AG04449 (cell line): ENCODE measurements at regions of chr1 and their contacts with region 1.

Region 1: GRCh38 chr1:55021965-55022546 is 17.3 kb upstream of the PCSK9 start:
- DNase-seq: peak; percentile 40
- H3K4me3 ChIP-seq: no peak overlapping the region
- CTCF ChIP-seq: peak; percentile 95

Region 2: DNA sequence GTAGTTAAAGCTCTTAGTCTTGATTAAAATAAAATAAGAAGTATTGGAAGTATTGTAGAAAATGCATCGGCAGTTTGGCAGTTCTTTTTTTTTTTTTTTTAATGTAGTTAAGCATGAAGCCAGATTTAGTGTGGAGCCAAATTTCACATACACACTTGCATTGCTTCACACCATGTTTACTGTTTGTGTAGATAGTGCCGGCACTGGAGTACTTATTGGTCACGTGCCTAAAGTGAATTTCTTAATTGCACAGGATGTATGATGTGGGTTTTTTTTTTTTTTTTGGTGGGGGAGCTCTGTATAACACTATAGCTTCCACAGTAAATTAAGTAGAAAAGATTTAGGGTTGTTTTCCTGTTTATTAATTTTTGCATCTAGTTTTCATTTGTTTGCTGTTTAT is 62.8 kb before region 1 on chr1:
- CTCF ChIA-PET with region 1: interaction called, 656 read pairs
- POLR2A ChIA-PET with region 1: no interaction called
- DNase-seq: no peak
- H3K4me3 ChIP-seq: no peak overlapping the region
- CTCF ChIP-seq: no peak

Region 3: GRCh38 chr1:54973205-54973921 is 48.7 kb before region 1 on chr1:
- CTCF ChIA-PET with region 1: interaction called, 10 read pairs
- POLR2A ChIA-PET with region 1: no interaction called
- DNase-seq: no peak
- H3K4me3 ChIP-seq: no peak overlapping the region
- CTCF ChIP-seq: peak; percentile 53

Region 4: DNA sequence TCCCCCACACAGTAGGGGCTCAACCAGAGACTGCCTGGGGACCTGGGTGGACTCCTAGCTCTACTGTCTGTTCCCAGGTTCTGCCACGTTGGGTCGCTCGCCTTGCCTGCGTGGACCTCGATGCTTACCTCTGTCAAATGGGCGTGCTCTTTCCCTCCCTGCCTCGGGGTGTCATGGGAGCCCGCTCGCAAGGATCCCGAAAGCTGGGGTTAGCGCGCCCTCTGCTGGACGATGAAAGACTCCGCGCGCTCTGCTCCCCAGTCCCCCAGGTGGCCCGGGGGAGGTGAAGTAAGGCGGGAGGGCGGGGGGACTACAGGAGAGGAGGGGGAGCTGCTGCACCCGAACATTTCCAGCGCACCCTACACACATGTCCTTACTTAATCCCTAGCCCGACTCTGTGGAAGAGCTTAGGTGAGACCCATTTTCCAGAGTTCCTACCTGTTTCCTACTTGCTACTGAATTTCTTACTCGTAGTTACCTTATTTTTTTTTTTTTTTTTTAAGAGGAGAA is 25.6 kb before region 1 on chr1:
- CTCF ChIA-PET with region 1: interaction called, 14 read pairs
- POLR2A ChIA-PET with region 1: interaction called, 3 read pairs
- DNase-seq: no peak
- H3K4me3 ChIP-seq: no peak overlapping the region
- CTCF ChIP-seq: peak; percentile 87

Region 5: DNA sequence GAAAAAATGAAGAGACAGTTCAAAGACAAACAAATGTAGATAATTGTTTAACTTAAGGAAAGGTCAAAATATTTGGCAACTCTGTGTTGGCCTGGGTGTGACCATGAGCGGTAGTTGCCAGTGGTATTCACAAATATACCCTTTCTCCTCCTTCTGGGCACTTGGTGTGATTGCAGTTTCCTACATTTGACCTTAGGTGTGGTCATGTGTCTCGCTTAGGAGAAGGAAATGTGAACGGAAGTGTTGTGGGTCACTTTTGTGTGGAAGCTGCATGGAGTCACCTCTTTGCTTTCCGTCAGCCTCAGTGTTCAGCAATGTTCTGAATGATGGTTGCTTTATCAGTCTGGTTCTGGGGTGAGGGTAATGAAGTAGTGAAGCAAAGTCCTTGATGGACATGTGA is 13.8 kb after region 1 on chr1:
- CTCF ChIA-PET with region 1: interaction called, 36 read pairs
- POLR2A ChIA-PET with region 1: no interaction called
- DNase-seq: no peak
- H3K4me3 ChIP-seq: no peak overlapping the region
- CTCF ChIP-seq: no peak